Esophagus muscularis mucosa (tissue), 4 donors: ENCODE measurements at regions of chrX and their contacts with region 1.

Region 1: DNA sequence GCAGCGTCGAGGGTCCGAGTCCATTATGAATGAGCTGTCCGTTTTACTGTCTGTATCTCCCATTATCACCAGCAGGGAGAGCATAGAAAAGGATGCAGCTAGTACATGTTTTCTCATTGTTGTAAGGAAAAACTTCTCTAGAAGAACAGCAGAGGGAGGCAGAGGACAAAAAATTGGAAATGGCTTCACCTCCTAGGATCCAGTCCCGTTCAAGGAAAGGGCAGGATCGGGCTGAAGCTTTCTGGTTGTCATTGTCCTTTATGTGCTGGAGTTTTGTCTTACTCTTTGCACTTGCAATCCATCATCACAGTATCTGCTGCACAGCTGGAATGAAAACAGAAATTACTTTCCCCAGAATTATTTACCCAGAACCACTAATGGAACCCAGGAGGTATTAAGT is 14.7 kb downstream of the NDP start:
- DNase-seq: no peak
- H3K4me3 ChIP-seq: no peak overlapping the region
- H3K27ac ChIP-seq: no peak overlapping the region
- H3K4me1 ChIP-seq: no peaks in the 10 kb centered on the region
- H3K27me3 ChIP-seq: peaks cover 0 to under 1% (median 0%) of the 10 kb centered on the region in 4 donors
- CTCF ChIP-seq: peak; percentile 71 to 77 (median 77)
- EP300 ChIP-seq: no peak
- POLR2A ChIP-seq: no peak

Region 2: DNA sequence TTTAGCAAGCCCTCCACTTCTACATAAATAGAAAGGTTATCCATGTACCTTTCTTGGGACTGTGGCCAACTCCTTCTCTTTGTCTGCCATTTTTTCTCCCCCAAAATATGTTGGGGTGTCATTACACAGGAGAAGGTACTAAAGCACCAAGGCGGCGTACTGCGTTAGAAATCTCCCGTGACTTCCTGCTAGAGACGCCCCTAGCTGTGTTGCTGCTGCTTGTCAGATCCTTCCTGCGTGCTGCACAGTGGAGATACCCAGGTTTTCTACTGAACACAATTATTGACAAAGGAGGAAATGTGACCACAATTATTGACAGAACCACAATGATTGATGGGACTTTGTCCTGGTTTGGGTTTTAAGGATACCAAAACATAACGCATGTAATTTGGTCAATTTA is 287.2 kb after region 1 on chrX:
- intact Hi-C with region 1: loop called (anchors 5 kb)
- DNase-seq: no peak
- H3K4me3 ChIP-seq: no peak overlapping the region
- H3K27ac ChIP-seq: no peak overlapping the region
- H3K4me1 ChIP-seq: no peaks in the 10 kb centered on the region
- H3K27me3 ChIP-seq: peaks cover 0 to 6% (median 0%) of the 10 kb centered on the region in 4 donors
- CTCF ChIP-seq: no peak
- EP300 ChIP-seq: no peak
- POLR2A ChIP-seq: no peak

Region 3: GRCh38 chrX:45186643-45187026 is 1228.1 kb after region 1 on chrX:
- intact Hi-C with region 1: loop called (anchors 5 kb)
- DNase-seq: no peak
- H3K4me3 ChIP-seq: peak overlapping the region; percentile 46 to 60 (median 52)
- H3K27ac ChIP-seq: no peak overlapping the region
- H3K4me1 ChIP-seq: peaks cover 5 to 13% (median 9%) of the 10 kb centered on the region in 4 donors
- H3K27me3 ChIP-seq: peaks cover 0 to 6% (median 0%) of the 10 kb centered on the region in 4 donors
- CTCF ChIP-seq: no peak
- EP300 ChIP-seq: no peak
- POLR2A ChIP-seq: no peak